Activated naive CD4-positive, alpha-beta T cell treated with anti-CD3 and anti-CD28 coated beads for 36 hours (primary cell): ENCODE measurements at regions of chrX and their contacts with region 1.

Region 1: DNA sequence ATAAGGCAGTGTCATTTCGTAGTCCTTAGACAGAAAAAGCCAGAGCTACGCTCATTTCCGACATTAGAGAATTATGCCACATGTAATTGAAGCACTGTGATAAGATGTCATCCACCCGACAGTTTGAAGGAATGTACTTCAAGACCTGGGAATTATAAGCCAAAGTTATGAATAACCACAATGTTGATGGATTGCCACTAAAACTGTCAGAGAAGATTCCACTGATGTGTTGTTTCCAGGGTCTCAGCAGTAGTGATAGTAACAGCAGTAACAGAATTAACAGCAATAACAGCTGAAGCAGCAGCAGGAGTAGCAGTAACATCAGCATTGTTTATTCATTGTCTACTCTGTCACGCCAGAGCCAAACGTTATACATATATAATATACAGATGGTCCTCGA is 24.7 kb downstream of the RAB33A start:
- DNase-seq: no peak
- H3K4me3 Mint-ChIP-seq: no peak overlapping the region
- H3K27ac Mint-ChIP-seq: no peak overlapping the region
- H3K4me1 Mint-ChIP-seq: no peaks in the 10 kb centered on the region
- H3K27me3 Mint-ChIP-seq: no peaks in the 10 kb centered on the region

Region 2: GRCh38 chrX:130144509-130144908 is 52.0 kb before region 1 on chrX:
- CTCF ChIA-PET with region 1: interaction called, 3 read pairs
- intact Hi-C with region 1: loop called (anchors 1 kb)
- DNase-seq: no peak
- H3K4me3 Mint-ChIP-seq: no peak overlapping the region
- H3K27ac Mint-ChIP-seq: no peak overlapping the region
- H3K4me1 Mint-ChIP-seq: no peaks in the 10 kb centered on the region
- H3K27me3 Mint-ChIP-seq: no peaks in the 10 kb centered on the region